Dendritic cell treated with granulocyte-macrophage colony-stimulating factor and Interleukin-4, amounts not matched to agents 40 ng/mL and 50 ng/mL, for 4 days (primary cell): ENCODE measurements at regions of chr2 and their contacts with region 1.

Region 1: GRCh38 chr2:202178342-202178958 is 59.9 kb downstream of the SUMO1 start:
- H3K4me3 Mint-ChIP-seq: no peak overlapping the region
- H3K27ac Mint-ChIP-seq: no peak overlapping the region
- H3K4me1 Mint-ChIP-seq: no peaks in the 10 kb centered on the region
- H3K27me3 Mint-ChIP-seq: peaks cover 4% of the 10 kb centered on the region

Region 2: GRCh38 chr2:201795607-201796477 is 382.6 kb before region 1 on chr2:
- intact Hi-C with region 1: loop called (anchors 5 kb)
- H3K4me3 Mint-ChIP-seq: no peak overlapping the region
- H3K27ac Mint-ChIP-seq: no peak overlapping the region
- H3K4me1 Mint-ChIP-seq: no peaks in the 10 kb centered on the region
- H3K27me3 Mint-ChIP-seq: no peaks in the 10 kb centered on the region

Region 3: GRCh38 chr2:201860636-201861066 is 317.8 kb before region 1 on chr2:
- intact Hi-C with region 1: loop called (anchors 1 kb)
- H3K4me3 Mint-ChIP-seq: no peak overlapping the region
- H3K27ac Mint-ChIP-seq: no peak overlapping the region
- H3K4me1 Mint-ChIP-seq: peaks cover 16% of the 10 kb centered on the region
- H3K27me3 Mint-ChIP-seq: peaks cover 34% of the 10 kb centered on the region

Region 4: DNA sequence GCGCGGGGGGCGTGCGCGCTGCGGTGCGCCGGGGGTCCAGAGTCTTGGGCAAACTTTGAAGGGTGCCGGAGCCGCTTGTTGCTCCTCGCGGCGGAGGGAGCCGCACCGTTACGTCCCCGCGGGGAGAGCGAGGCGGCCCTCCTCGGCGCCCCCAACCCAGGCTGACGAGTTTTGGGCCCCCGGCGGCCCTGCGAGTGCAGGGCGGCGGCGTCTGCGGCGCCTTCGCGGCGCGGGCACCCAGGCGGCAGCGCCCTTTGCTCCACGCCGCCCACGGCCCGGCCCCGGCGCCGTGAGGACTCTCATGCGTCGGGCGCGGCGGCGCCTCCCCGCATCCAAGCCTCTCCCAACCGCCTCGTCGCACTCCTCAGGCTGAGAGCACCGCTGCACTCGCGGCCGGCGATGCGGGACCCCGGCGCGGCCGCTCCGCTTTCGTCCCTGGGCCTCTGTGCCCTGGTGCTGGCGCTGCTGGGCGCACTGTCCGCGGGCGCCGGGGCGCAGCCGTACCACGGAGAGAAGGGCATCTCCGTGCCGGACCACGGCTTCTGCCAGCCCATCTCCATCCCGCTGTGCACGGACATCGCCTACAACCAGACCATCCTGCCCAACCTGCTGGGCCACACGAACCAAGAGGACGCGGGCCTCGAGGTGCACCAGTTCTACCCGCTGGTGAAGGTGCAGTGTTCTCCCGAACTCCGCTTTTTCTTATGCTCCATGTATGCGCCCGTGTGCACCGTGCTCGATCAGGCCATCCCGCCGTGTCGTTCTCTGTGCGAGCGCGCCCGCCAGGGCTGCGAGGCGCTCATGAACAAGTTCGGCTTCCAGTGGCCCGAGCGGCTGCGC is 144.0 kb before region 1 on chr2:
- intact Hi-C with region 1: loop called (anchors 5 kb)
- H3K4me3 Mint-ChIP-seq: no peak overlapping the region
- H3K27ac Mint-ChIP-seq: peak overlapping the region; percentile 80
- H3K4me1 Mint-ChIP-seq: peaks cover 15% of the 10 kb centered on the region
- H3K27me3 Mint-ChIP-seq: peaks cover 45% of the 10 kb centered on the region

Region 5: DNA sequence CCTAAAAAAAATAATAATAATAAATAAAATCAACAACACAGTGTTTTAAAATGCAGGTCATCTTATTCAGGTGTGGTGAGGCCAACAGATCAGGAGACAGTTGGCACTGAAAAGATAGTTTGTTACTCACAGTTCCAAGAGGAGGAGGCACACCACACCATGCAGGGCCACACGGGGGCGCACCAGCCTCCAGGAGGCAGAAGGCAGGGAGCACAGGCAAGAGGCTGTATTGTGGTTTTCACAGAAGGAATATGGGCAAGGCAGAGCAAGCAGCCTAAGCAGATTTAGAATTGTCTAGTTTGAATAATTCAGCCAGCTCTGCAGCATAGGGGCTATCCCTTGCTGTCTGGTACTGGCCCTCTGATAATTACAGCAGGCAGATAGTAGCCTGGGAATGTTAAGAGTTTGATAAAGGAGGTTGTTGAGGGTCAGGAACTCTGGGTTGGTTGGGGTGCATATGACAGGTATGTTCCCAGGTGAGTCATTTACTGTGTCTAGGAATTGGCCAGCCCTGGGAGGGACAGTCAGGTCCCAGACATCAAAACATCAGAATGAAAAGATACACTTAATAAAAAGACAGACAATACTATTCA is 74.1 kb before region 1 on chr2:
- intact Hi-C with region 1: loop called (anchors 1 kb)
- H3K4me3 Mint-ChIP-seq: no peak overlapping the region
- H3K27ac Mint-ChIP-seq: peak overlapping the region; percentile 3
- H3K4me1 Mint-ChIP-seq: peaks cover 17% of the 10 kb centered on the region
- H3K27me3 Mint-ChIP-seq: peaks cover 9% of the 10 kb centered on the region

Region 6: GRCh38 chr2:202121532-202122162 is 56.8 kb before region 1 on chr2:
- intact Hi-C with region 1: no loop called
- H3K4me3 Mint-ChIP-seq: peak overlapping the region; percentile 0
- H3K27ac Mint-ChIP-seq: peak overlapping the region; percentile 87
- H3K4me1 Mint-ChIP-seq: peaks cover 41% of the 10 kb centered on the region
- H3K27me3 Mint-ChIP-seq: peaks cover 6% of the 10 kb centered on the region

Region 7: GRCh38 chr2:202299712-202300111 is 121.3 kb after region 1 on chr2:
- intact Hi-C with region 1: no loop called
- H3K4me3 Mint-ChIP-seq: no peak overlapping the region
- H3K27ac Mint-ChIP-seq: no peak overlapping the region
- H3K4me1 Mint-ChIP-seq: no peaks in the 10 kb centered on the region
- H3K27me3 Mint-ChIP-seq: no peaks in the 10 kb centered on the region